Activated CD4-positive, alpha-beta memory T cell treated with anti-CD3 and anti-CD28 coated beads, Interleukin-2, amount 10 ng/mL, durations not matched to agents 7 days and 5 days (primary cell): ENCODE measurements at regions of chr16 and their contacts with region 1.

Region 1: GRCh38 chr16:67641779-67642708 is 2.9 kb upstream of the CARMIL2 start:
- DNase-seq: no peak
- H3K4me3 Mint-ChIP-seq: no peak overlapping the region
- H3K27ac Mint-ChIP-seq: no peak overlapping the region
- H3K4me1 Mint-ChIP-seq: peaks cover 24% of the 10 kb centered on the region
- H3K27me3 Mint-ChIP-seq: no peaks in the 10 kb centered on the region

Region 2: DNA sequence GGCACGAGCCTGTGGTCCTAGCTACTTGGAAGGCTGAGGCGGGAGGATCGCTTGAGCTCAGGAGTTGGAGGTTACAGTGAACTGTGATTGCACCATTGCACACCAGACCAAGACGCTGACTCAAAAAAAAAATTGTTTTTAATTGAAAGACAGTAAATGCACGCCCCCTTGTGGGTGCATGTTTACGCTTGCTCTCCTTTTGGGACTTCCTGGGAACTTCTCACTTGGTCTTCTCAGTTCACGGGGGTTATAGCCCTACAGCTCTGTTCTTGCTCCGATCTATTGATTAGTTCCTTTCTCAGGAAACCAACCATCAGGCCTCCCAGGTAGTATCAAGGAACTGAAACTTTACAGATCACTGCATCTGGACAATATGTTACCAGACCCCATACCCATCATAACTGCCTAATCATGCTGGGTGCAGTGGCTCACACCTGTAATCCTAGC is 127.6 kb before region 1 on chr16:
- CTCF ChIA-PET with region 1: interaction called, 107 read pairs
- POLR2A ChIA-PET with region 1: no interaction called
- DNase-seq: peak; percentile 87
- H3K4me3 Mint-ChIP-seq: no peak overlapping the region
- H3K27ac Mint-ChIP-seq: peak overlapping the region; percentile 61
- H3K4me1 Mint-ChIP-seq: peaks cover 23% of the 10 kb centered on the region
- H3K27me3 Mint-ChIP-seq: peaks cover 4% of the 10 kb centered on the region

Region 3: DNA sequence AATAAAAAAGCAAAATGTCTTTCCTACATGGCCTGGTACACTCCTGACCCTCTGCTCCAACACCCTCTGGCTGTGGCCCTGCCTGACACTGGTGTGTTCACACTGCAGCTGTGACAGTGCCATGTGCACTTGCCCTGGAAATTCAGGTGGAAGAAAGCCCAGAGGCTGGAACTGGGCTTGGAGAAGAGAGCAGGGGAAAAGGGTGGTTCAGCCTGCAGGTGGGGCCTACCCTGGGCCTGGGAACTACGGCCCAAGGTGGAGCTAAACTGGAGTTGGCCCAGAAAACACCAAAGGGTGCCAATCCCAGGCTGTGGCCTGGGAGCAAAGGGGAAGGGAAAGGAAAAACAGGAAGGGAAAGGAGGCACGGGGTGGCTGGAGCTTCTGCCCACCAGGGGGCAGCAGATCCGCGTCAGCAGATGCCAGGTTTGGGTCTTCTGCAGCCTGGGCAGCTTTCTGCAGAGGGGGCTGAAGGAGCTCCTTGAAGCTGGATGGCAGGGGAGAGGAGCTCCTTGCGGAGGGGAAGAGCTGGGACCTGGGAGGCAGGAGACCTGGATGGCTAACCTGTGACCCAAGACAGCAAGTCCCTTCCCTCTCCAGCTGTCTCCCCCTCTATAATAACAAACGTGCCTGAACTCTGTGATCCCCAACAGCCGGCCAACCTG is 95.2 kb before region 1 on chr16:
- CTCF ChIA-PET with region 1: interaction called, 140 read pairs
- POLR2A ChIA-PET with region 1: interaction called, 107 read pairs
- DNase-seq: peak; percentile 81
- H3K4me3 Mint-ChIP-seq: peak overlapping the region; percentile 37
- H3K27ac Mint-ChIP-seq: peak overlapping the region; percentile 96
- H3K4me1 Mint-ChIP-seq: peaks cover 47% of the 10 kb centered on the region
- H3K27me3 Mint-ChIP-seq: no peaks in the 10 kb centered on the region

Region 4: GRCh38 chr16:67561824-67562525 is 80.1 kb before region 1 on chr16:
- CTCF ChIA-PET with region 1: interaction called, 75 read pairs
- POLR2A ChIA-PET with region 1: interaction called, 77 read pairs
- DNase-seq: peak; percentile 99
- H3K4me3 Mint-ChIP-seq: peak overlapping the region; percentile 86
- H3K27ac Mint-ChIP-seq: peak overlapping the region; percentile 92
- H3K4me1 Mint-ChIP-seq: peaks cover 43% of the 10 kb centered on the region
- H3K27me3 Mint-ChIP-seq: no peaks in the 10 kb centered on the region

Region 5: GRCh38 chr16:67667817-67668494 is 25.9 kb after region 1 on chr16:
- CTCF ChIA-PET with region 1: interaction called, 15 read pairs
- POLR2A ChIA-PET with region 1: interaction called, 15 read pairs
- DNase-seq: peak; percentile 88
- H3K4me3 Mint-ChIP-seq: peak overlapping the region; percentile 86
- H3K27ac Mint-ChIP-seq: no peak overlapping the region
- H3K4me1 Mint-ChIP-seq: peaks cover 30% of the 10 kb centered on the region
- H3K27me3 Mint-ChIP-seq: no peaks in the 10 kb centered on the region